Pancreas (tissue), 10 donors: ENCODE measurements at regions of chr2 and their contacts with region 1.

Region 1: DNA sequence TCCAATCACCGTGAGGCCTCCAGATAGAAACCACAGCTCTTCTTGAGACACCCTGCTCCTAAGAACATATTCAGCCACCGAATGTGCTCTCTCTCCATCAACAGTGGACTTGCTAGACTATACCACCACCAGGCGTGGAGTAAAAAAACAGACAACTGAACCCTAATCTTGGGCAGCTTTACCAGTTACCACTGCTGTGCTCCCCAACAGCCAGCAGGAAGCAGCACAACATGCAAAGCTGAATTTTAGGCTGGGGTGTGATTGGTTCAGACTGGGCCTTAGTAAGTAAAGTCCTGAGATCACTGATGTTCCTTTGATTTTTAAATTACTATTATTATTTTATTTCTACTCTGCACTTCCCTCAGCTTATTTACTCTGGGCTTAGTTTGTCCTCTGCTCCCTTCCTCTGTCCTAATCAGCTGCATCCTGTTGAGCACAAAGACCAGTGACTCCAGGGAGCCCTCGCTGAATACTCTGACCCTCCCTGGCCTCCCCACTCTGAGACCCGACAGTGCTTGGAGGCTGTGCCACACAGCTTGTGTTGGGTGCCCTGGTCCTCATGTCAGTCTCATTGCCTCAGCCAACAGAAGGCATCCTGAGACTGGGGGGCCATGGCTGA is 21.9 kb downstream of the MRPL35 start:
- DNase-seq: peak in 4 of 6 donors; percentile 24 to 75 (median 54)
- ATAC-seq: peak; percentile 70 to 84 (median 82)
- H3K4me3 ChIP-seq: no peak overlapping the region
- H3K27ac ChIP-seq: no peak overlapping the region
- H3K4me1 ChIP-seq: peaks cover 0 to 3% (median 0%) of the 10 kb centered on the region in 3 donors
- H3K27me3 ChIP-seq: no peaks in the 10 kb centered on the region
- CTCF ChIP-seq: peak; percentile 58 to 89 (median 87)

Region 2: DNA sequence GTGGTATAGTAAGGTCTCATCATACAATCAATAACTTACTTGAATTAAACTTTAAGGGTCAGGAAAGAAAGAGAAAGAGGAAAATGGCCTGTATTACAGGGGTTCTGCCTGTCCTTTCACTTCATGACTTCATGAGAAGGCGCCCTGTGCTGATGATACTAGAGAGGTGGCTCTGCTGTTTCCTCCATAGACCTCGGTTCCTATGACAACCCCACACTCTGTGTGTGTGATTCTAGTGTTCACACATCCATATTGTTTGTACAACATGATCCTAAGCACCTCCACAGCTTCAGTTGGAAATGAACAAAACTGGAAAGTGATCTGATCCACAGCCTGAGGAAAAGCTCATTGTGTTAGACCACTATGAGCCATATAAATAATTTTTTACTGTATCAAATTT is 123.2 kb after region 1 on chr2:
- intact Hi-C with region 1: no loop called
- DNase-seq: no peak
- ATAC-seq: no peak
- H3K4me3 ChIP-seq: no peak overlapping the region
- H3K27ac ChIP-seq: no peak overlapping the region
- H3K4me1 ChIP-seq: no peaks in the 10 kb centered on the region
- H3K27me3 ChIP-seq: no peaks in the 10 kb centered on the region
- CTCF ChIP-seq: no peak

Region 3: DNA sequence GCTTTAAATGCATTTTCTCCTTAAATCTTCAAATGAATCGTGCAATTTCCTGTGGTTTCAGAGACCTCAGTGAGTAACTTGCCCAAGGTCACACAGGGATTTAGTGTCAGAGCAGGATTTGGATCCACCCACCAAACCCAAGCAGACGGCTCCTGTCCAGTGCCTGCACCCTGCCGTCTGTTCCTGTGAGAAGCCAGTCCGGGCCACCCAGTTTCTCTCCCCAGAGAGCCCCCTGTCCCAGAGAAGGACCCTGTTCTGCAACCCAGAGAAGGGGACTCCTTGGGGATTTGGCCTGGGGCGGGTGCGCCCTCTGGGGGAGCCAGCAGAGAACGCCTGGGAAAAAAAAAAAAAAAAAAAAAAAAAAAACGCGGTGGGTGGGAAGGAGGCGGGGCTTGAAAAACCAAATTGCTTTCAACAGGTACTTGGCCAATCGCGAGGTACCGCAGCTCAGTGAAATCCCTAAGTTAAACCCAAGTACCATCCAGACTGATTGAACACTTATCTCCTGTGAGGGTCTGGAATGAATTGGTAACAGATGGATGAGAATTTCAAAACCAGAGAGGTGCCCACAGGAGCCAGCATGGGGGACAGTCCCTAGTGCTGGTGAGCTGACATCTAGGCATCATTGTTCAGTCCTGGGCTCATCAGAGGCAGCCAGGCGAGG is 147.1 kb after region 1 on chr2:
- intact Hi-C with region 1: loop called (anchors 5 to 10 kb)
- DNase-seq: peak; percentile 26 to 72 (median 54)
- ATAC-seq: peak; percentile 56 to 86 (median 81)
- H3K4me3 ChIP-seq: peak overlapping the region in 2 of 4 donors; percentile 1 to 8
- H3K27ac ChIP-seq: no peak overlapping the region
- H3K4me1 ChIP-seq: peaks cover 11 to 20% (median 15%) of the 10 kb centered on the region in 3 donors
- H3K27me3 ChIP-seq: no peaks in the 10 kb centered on the region
- CTCF ChIP-seq: peak; percentile 17 to 51 (median 41)